ENCODE measurements at regions of chr6 and their contacts with region 1.

Region 1: DNA sequence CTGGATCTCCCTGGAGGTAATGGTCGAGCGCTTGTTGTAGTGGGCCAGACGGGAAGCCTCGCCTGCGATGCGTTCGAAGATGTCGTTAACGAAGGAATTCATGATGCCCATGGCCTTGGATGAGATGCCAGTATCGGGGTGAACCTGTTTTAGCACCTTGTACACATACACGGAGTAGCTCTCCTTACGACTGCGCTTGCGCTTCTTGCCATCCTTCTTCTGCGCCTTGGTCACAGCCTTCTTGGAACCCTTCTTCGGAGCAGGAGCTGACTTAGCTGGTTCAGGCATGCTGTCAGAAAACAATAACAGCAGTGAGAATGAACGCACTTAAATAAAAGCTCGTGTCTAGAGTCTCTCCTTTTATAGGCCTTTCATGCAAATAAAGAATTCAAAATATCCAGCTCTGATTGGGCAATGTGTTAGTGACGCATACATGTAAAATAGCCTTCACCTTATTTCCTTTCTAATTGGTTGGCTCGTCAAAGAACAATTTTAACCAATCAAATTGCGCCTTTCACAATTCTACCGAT is 129.2 kb downstream of the HFE start:
- DNase-seq: peak; percentile 77 to 80 (median 78)
- ATAC-seq: peak; percentile 83
- H3K4me3 ChIP-seq: peak overlapping the region; percentile 9
- H3K4me1 ChIP-seq: peaks cover 13% of the 10 kb centered on the region
- CTCF ChIP-seq: no peak

Region 2: GRCh38 chr6:26025894-26026832 is 190.3 kb before region 1 on chr6:
- intact Hi-C with region 1: no loop called
- DNase-seq: peak; percentile 95 to 98 (median 97)
- ATAC-seq: peak; percentile 72
- H3K4me3 ChIP-seq: peak overlapping the region; percentile 35
- H3K4me1 ChIP-seq: peaks cover 7% of the 10 kb centered on the region
- CTCF ChIP-seq: peak; percentile 84

Region 3: GRCh38 chr6:27132532-27133280 is 916.3 kb after region 1 on chr6:
- intact Hi-C with region 1: loop called in 1 of 2 experiments (anchors 10 kb)
- DNase-seq: peak; percentile 88 to 95 (median 90)
- ATAC-seq: peak; percentile 90
- H3K4me3 ChIP-seq: peak overlapping the region; percentile 31
- H3K4me1 ChIP-seq: peaks cover 9% of the 10 kb centered on the region
- CTCF ChIP-seq: peak; percentile 31